CD4-positive, alpha-beta memory T cell (primary cell): ENCODE measurements at regions of chr14 and their contacts with region 1.

Region 1: DNA sequence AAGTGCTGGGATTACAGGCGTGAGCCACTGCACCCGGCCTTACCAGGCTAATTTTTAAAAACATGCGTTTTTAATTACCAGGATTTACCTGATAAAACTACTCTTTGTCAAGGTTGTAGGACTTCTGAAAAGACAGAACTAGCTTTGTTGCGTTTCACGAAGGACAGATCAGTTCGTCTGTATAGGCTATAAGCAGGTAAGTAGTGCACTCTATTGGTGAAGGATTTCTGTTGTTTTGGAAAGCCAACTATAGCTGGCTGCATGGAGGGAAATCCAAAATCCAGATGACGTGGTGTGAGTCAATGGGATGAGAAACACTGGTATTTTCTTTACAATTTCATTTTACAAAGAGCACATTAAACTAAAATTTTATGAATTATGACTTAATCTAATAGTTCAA is 14.6 kb downstream of the GNPNAT1 start:
- DNase-seq: peak in 1 of 5 donors; percentile 12
- H3K4me3 ChIP-seq: no peak overlapping the region
- H3K4me3 Mint-ChIP-seq: no peak overlapping the region
- H3K27ac ChIP-seq: no peak overlapping the region
- H3K27ac Mint-ChIP-seq: peak overlapping the region in 2 of 7 donors; percentile 10 to 15
- H3K4me1 ChIP-seq: no peaks in the 10 kb centered on the region
- H3K4me1 Mint-ChIP-seq: peaks cover 0 to 5% (median 2%) of the 10 kb centered on the region in 4 donors
- H3K27me3 ChIP-seq: no peaks in the 10 kb centered on the region
- H3K27me3 Mint-ChIP-seq: no peaks in the 10 kb centered on the region

Region 2: GRCh38 chr14:52678591-52678990 is 98.2 kb before region 1 on chr14:
- CTCF ChIA-PET with region 1: interaction called, 3 read pairs
- POLR2A ChIA-PET with region 1: no interaction called
- intact Hi-C with region 1: loop called (anchors 5 kb)
- DNase-seq: peak in 4 of 5 donors; percentile 12 to 32 (median 23)
- H3K4me3 ChIP-seq: no peak overlapping the region
- H3K4me3 Mint-ChIP-seq: no peak overlapping the region
- H3K27ac ChIP-seq: no peak overlapping the region
- H3K27ac Mint-ChIP-seq: no peak overlapping the region
- H3K4me1 ChIP-seq: no peaks in the 10 kb centered on the region
- H3K4me1 Mint-ChIP-seq: peaks cover 2 to 19% (median 4%) of the 10 kb centered on the region in 4 donors
- H3K27me3 ChIP-seq: no peaks in the 10 kb centered on the region
- H3K27me3 Mint-ChIP-seq: no peaks in the 10 kb centered on the region

Region 3: GRCh38 chr14:52918486-52918885 is 141.7 kb after region 1 on chr14:
- CTCF ChIA-PET with region 1: no interaction called
- POLR2A ChIA-PET with region 1: no interaction called
- intact Hi-C with region 1: no loop called
- DNase-seq: peak; percentile 55 to 82 (median 75)
- H3K4me3 ChIP-seq: no peak overlapping the region
- H3K4me3 Mint-ChIP-seq: peak overlapping the region in 3 of 8 donors; percentile 13 to 48 (median 15)
- H3K27ac ChIP-seq: peak overlapping the region; percentile 57
- H3K27ac Mint-ChIP-seq: peak overlapping the region; percentile 88 to 95 (median 93)
- H3K4me1 ChIP-seq: peaks cover 24% of the 10 kb centered on the region
- H3K4me1 Mint-ChIP-seq: peaks cover 18 to 42% (median 26%) of the 10 kb centered on the region in 4 donors
- H3K27me3 ChIP-seq: no peaks in the 10 kb centered on the region
- H3K27me3 Mint-ChIP-seq: no peaks in the 10 kb centered on the region

Region 4: GRCh38 chr14:53193193-53193592 is 416.4 kb after region 1 on chr14:
- CTCF ChIA-PET with region 1: no interaction called
- POLR2A ChIA-PET with region 1: no interaction called
- intact Hi-C with region 1: no loop called
- DNase-seq: no peak
- H3K4me3 ChIP-seq: no peak overlapping the region
- H3K4me3 Mint-ChIP-seq: no peak overlapping the region
- H3K27ac ChIP-seq: no peak overlapping the region
- H3K27ac Mint-ChIP-seq: no peak overlapping the region
- H3K4me1 ChIP-seq: no peaks in the 10 kb centered on the region
- H3K4me1 Mint-ChIP-seq: no peaks in the 10 kb centered on the region
- H3K27me3 ChIP-seq: no peaks in the 10 kb centered on the region
- H3K27me3 Mint-ChIP-seq: no peaks in the 10 kb centered on the region

Region 5: GRCh38 chr14:53306911-53307310 is 530.1 kb after region 1 on chr14:
- CTCF ChIA-PET with region 1: no interaction called
- POLR2A ChIA-PET with region 1: no interaction called
- intact Hi-C with region 1: no loop called
- DNase-seq: no peak
- H3K4me3 ChIP-seq: no peak overlapping the region
- H3K4me3 Mint-ChIP-seq: peak overlapping the region in 2 of 8 donors; percentile 6
- H3K27ac ChIP-seq: no peak overlapping the region
- H3K27ac Mint-ChIP-seq: no peak overlapping the region
- H3K4me1 ChIP-seq: peaks cover 9% of the 10 kb centered on the region
- H3K4me1 Mint-ChIP-seq: peaks cover 2 to 7% (median 5%) of the 10 kb centered on the region in 4 donors
- H3K27me3 ChIP-seq: no peaks in the 10 kb centered on the region
- H3K27me3 Mint-ChIP-seq: peaks cover 0 to 1% of the 10 kb centered on the region in 2 donors